ENCODE measurements at regions of chr9 and their contacts with region 1.

Region 1: DNA sequence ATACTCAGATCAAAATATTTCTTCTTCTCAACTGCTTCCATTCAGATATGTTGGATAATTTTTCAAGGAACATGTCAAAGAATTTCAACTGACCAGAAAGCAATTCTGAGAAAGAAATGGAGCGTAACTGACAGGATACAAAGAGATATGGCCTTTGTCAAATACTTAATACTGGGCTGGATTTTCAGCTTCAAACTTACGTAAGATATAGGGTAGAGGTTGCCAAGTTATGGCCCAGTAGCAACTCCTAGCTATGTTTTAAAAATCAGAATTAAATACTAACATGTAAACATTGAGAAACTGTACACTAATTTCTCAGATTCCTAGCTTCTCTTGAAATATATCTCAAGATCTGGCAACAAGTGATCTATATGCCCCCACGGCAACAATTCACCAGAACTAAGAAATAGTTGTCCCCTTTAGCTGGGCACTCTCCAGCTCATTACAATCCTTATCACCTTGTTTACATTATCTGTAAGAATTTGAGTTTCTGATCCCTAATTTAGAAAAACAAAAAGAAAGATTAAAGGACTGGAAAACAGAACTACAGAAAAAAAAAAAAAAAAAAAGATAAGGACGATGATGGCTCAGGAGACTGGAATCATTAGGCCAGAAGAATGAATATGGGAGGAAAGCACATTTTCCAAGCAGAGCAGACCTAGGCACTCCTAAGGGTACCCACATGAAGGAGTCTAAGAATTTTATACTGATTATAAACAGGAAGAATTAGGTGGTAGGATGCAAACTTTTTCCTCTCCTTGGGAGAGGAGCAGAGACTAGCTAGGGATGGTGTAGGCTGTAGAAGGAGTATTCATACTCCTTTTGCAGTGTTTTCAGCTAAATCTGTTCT is 23.0 kb downstream of the INIP start:
- DNase-seq: no peak
- ATAC-seq: no peak
- H3K4me3 ChIP-seq: no peak overlapping the region
- H3K27ac ChIP-seq: no peak overlapping the region
- H3K4me1 ChIP-seq: no peaks in the 10 kb centered on the region
- H3K27me3 ChIP-seq: no peaks in the 10 kb centered on the region
- CTCF ChIP-seq: no peak

Region 2: GRCh38 chr9:112028280-112029221 is 666.4 kb before region 1 on chr9:
- CTCF ChIA-PET with region 1: interaction called, 14 read pairs
- POLR2A ChIA-PET with region 1: no interaction called
- in situ Hi-C with region 1: no loop called
- intact Hi-C with region 1: no loop called
- DNase-seq: no peak
- ATAC-seq: peak; percentile 33; the same call in 1 of the 2 replicates
- H3K4me3 ChIP-seq: no peak overlapping the region
- H3K27ac ChIP-seq: peak overlapping the region; percentile 67
- H3K4me1 ChIP-seq: peaks cover 15% of the 10 kb centered on the region
- H3K27me3 ChIP-seq: no peaks in the 10 kb centered on the region
- CTCF ChIP-seq: no peak

Region 3: DNA sequence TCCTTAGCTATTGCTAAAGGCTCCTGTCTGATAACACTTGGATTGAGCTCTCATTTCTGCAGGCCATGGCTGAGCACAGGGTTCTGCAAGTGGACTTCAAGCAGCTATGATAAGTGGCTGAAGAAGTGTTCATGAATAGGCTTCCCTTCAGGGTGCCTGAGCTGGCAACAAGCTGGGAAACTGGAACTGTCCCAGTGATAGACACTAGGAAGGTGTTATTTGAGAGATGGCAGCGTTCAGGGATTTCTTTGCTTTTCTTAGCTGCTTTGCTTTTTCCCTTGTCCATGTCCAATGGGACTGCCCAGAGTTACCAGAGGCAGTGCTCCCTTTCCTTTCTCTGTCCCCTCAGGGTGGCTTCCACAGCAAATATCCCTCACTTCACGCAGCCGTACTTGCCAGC is 52.8 kb before region 1 on chr9:
- CTCF ChIA-PET with region 1: no interaction called
- POLR2A ChIA-PET with region 1: no interaction called
- in situ Hi-C with region 1: no loop called
- intact Hi-C with region 1: no loop called
- DNase-seq: no peak
- ATAC-seq: no peak
- H3K4me3 ChIP-seq: no peak overlapping the region
- H3K27ac ChIP-seq: no peak overlapping the region
- H3K4me1 ChIP-seq: no peaks in the 10 kb centered on the region
- H3K27me3 ChIP-seq: no peaks in the 10 kb centered on the region
- CTCF ChIP-seq: no peak